Activated CD4-positive, alpha-beta memory T cell treated with anti-CD3 and anti-CD28 coated beads, Interleukin-2, amount 10 ng/mL, durations not matched to agents 7 days and 5 days (primary cell): ENCODE measurements at regions of chr10 and their contacts with region 1.

Region 1: DNA sequence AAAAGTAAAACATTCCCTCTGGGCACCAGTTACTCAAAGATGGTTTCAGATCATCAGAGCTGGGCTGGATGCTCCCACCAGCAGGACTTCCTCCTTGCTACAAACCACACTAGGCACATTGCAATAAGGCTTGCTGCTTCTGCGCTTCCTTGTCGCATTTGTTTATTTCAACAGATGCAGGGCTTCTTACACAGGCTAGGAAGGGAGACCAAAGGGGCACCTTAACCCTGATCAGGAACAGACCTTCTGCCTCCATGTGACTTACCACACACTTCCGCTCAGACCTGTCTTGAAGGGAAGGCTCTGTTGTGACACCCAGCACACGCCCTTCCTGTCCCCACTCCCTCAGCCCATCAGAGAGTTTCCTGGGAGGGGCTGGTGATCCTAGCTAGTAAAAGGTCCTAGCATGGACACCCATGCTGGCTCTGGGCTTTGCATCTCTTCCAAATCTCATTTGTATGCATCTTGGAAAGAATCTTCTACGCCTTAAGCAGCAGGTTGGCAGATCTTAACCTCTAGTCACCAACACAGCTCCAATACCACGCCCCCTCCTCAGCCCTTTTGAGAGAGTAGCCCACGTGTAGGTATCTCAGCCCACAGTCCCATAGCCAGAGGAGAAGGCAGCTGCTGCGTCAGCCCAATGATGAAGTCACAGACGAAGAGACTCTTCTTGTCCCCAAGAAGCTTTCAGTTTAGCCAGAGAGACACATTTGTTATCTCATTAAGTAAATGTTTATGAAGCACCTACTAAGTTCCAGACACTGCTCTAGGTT is 47.1 kb upstream of the SVIL start:
- DNase-seq: peak; percentile 83
- H3K4me3 Mint-ChIP-seq: peak overlapping the region; percentile 44
- H3K27ac Mint-ChIP-seq: peak overlapping the region; percentile 90
- H3K4me1 Mint-ChIP-seq: peaks cover 43% of the 10 kb centered on the region
- H3K27me3 Mint-ChIP-seq: no peaks in the 10 kb centered on the region

Region 2: GRCh38 chr10:29658984-29659965 is 22.6 kb before region 1 on chr10:
- CTCF ChIA-PET with region 1: interaction called, 6 read pairs
- POLR2A ChIA-PET with region 1: interaction called, 10 read pairs
- DNase-seq: peak; percentile 73
- H3K4me3 Mint-ChIP-seq: peak overlapping the region; percentile 46
- H3K27ac Mint-ChIP-seq: peak overlapping the region; percentile 71
- H3K4me1 Mint-ChIP-seq: peaks cover 33% of the 10 kb centered on the region
- H3K27me3 Mint-ChIP-seq: peaks cover 32% of the 10 kb centered on the region

Region 3: GRCh38 chr10:29715296-29715695 is 33.4 kb after region 1 on chr10:
- CTCF ChIA-PET with region 1: no interaction called
- POLR2A ChIA-PET with region 1: no interaction called
- DNase-seq: no peak
- H3K4me3 Mint-ChIP-seq: no peak overlapping the region
- H3K27ac Mint-ChIP-seq: no peak overlapping the region
- H3K4me1 Mint-ChIP-seq: no peaks in the 10 kb centered on the region
- H3K27me3 Mint-ChIP-seq: no peaks in the 10 kb centered on the region

Region 4: DNA sequence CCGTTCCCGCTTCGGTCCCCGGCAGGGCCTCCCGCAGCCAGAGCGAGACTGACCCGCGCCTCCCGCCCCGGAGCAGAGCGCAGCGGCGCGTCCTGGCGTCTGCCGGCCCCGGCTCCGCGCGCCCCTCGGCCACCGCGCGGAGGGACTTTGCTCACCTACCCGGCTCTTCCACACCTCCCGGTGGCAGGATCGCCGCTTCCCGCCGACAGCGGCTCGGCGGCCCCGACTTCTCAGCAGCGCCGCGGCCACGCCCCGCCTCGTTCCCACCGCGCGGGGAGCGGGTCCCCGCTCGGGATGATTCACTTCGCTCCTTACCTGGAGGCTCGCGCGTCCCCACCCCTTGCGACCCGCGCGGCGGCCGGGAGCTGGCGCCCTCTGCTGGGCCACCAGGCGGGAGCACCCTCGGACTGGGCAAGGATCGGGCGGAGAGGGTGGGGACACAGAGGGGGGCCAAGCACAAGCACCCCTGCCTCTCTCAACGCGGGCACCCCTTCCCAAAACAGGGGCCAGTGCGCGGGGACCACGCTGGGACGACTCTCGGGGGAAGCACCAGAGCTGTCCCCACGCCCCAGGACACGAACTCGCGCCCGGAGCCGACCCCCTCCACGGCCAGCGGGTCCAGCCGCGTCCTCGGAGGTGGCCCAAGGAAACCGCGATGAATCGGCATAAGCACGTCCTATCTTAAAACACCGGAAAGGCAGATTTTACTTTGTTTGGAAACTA is 53.9 kb after region 1 on chr10:
- CTCF ChIA-PET with region 1: interaction called, 7 read pairs
- POLR2A ChIA-PET with region 1: interaction called, 18 read pairs
- DNase-seq: peak; percentile 86
- H3K4me3 Mint-ChIP-seq: peak overlapping the region; percentile 73
- H3K27ac Mint-ChIP-seq: peak overlapping the region; percentile 59
- H3K4me1 Mint-ChIP-seq: peaks cover 15% of the 10 kb centered on the region
- H3K27me3 Mint-ChIP-seq: peaks cover 27% of the 10 kb centered on the region